ENCODE measurements at regions of chr2 and their contacts with region 1.

Region 1: GRCh38 chr2:11446733-11447248 is 19.2 kb downstream of the E2F6 start:
- DNase-seq: no peak
- H3K4me3 ChIP-seq: no peak overlapping the region
- CTCF ChIP-seq: peak; percentile 69

Region 2: DNA sequence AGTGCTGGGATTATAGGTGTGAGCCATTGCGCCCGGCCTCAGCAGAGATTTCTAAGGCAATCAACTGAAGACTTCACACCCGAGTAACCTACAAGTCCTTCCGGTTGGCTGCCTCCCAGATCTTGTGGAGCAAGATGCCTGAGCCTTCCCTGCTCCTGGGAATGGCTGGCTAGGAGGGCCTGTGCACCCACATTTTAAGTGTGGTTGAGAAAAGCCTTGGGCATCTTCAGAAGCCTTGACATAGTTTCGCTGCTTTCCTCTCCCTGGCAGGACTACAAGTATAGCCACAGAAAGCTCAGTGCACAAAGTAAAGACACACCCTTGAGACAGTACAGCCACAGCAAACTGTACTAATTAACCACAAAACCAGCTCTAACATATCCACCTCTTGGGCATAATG is 16.1 kb before region 1 on chr2:
- CTCF ChIA-PET with region 1: interaction called, 10 read pairs
- POLR2A ChIA-PET with region 1: interaction called, 3 read pairs
- DNase-seq: no peak
- H3K4me3 ChIP-seq: no peak overlapping the region
- CTCF ChIP-seq: no peak

Region 3: DNA sequence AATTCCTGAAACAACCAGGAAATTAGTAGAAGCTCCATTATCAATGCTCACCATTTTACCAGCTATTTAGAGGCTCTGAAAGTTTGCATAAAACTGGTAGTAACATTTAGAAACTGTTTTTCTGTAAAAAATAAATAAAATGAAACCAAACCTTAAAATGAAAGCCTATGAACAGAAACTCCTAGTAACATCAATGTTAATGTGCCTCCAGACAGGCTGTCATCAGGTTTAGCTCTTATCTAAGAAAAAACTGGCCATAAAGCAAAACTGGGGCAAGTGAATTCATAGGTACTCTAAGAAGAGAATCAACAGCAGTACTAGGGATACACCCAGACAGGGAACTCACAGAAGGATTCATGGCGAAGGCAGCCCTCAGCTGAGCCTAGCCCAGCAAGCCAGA is 11.1 kb after region 1 on chr2:
- CTCF ChIA-PET with region 1: interaction called, 10 read pairs
- POLR2A ChIA-PET with region 1: no interaction called
- DNase-seq: no peak
- H3K4me3 ChIP-seq: no peak overlapping the region
- CTCF ChIP-seq: no peak

Region 4: GRCh38 chr2:11473659-11474433 is 27.1 kb after region 1 on chr2:
- CTCF ChIA-PET with region 1: no interaction called
- POLR2A ChIA-PET with region 1: no interaction called
- DNase-seq: no peak
- H3K4me3 ChIP-seq: no peak overlapping the region
- CTCF ChIP-seq: no peak

Region 5: GRCh38 chr2:11539317-11540152 is 92.7 kb after region 1 on chr2:
- CTCF ChIA-PET with region 1: no interaction called
- POLR2A ChIA-PET with region 1: no interaction called
- DNase-seq: no peak
- H3K4me3 ChIP-seq: no peak overlapping the region
- CTCF ChIP-seq: no peak